Activated B cell treated with CpG ODN at 0.5 μM for 24 hours (primary cell): ENCODE measurements at regions of chr2 and their contacts with region 1.

Region 1: GRCh38 chr2:53505814-53506213 is 261.8 kb upstream of the CHAC2 start:
- DNase-seq: no peak
- ATAC-seq: no peak
- H3K4me3 Mint-ChIP-seq: no peak overlapping the region
- H3K27ac Mint-ChIP-seq: no peak overlapping the region
- H3K4me1 Mint-ChIP-seq: no peaks in the 10 kb centered on the region
- H3K27me3 Mint-ChIP-seq: no peaks in the 10 kb centered on the region
- CTCF ChIP-seq: no peak

Region 2: DNA sequence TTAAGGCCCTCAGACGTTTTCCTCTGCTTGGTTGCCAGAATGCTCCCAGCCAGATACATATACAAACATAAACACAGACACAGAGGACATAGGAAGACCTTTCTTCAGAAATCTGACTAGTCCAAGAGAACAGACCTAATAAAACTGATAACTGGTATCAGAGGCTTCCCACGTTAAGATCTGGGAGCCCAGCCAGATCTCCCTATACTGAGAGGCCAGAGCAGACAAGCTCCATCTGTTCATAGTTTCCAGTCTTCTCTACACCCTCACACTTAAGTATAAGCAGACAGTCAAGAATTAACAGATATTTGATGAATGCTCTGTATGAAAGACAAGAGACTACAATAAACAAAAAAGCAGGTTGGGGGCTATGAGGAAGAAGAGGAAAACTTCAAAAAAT is 21.2 kb after region 1 on chr2:
- CTCF ChIA-PET with region 1: no interaction called
- POLR2A ChIA-PET with region 1: no interaction called
- intact Hi-C with region 1: loop called (anchors 1 kb)
- DNase-seq: no peak
- ATAC-seq: no peak
- H3K4me3 Mint-ChIP-seq: no peak overlapping the region
- H3K27ac Mint-ChIP-seq: no peak overlapping the region
- H3K4me1 Mint-ChIP-seq: no peaks in the 10 kb centered on the region
- H3K27me3 Mint-ChIP-seq: no peaks in the 10 kb centered on the region
- CTCF ChIP-seq: no peak

Region 3: DNA sequence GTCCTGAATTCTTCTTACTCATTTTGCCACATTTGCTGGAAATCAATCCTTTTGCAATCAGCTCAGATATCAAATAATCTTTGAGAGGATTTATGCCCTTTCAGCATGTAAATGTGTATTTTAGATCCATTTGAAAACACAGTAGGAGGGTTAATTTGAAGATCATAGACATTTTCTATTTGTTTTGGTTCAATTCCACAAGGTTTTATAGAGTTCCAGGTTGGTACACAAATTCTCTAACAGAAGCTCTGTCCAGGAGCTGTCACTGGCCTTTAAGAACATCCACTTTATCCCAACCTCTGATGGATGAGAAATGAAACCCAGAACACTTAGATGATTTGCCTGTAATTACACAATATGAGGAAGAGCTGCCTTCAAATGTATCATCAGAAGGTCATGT is 104.4 kb after region 1 on chr2:
- CTCF ChIA-PET with region 1: no interaction called
- POLR2A ChIA-PET with region 1: no interaction called
- intact Hi-C with region 1: no loop called
- DNase-seq: no peak
- ATAC-seq: no peak
- H3K4me3 Mint-ChIP-seq: no peak overlapping the region
- H3K27ac Mint-ChIP-seq: no peak overlapping the region
- H3K4me1 Mint-ChIP-seq: no peaks in the 10 kb centered on the region
- H3K27me3 Mint-ChIP-seq: no peaks in the 10 kb centered on the region
- CTCF ChIP-seq: no peak

Region 4: DNA sequence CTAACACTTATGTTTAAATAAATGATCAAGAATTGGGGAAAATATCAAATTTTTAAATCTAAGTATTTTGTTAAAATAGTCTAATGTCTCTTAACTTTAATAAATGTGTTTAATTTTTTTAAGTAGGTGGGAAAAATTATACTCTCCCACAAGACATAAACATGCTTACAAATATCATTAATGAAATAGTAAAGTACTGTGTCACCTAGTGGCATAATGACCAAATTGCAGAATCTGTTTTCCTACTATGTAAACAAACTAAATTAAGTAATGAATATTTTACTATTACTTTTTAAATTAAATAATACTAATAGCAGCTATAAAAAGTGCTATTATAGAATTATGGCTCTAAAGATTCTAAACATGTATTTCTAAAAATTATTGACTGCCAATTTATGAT is 209.8 kb after region 1 on chr2:
- CTCF ChIA-PET with region 1: no interaction called
- POLR2A ChIA-PET with region 1: no interaction called
- intact Hi-C with region 1: no loop called
- DNase-seq: no peak
- ATAC-seq: no peak
- H3K4me3 Mint-ChIP-seq: no peak overlapping the region
- H3K27ac Mint-ChIP-seq: no peak overlapping the region
- H3K4me1 Mint-ChIP-seq: peaks cover 1% of the 10 kb centered on the region
- H3K27me3 Mint-ChIP-seq: no peaks in the 10 kb centered on the region
- CTCF ChIP-seq: no peak